Heart right ventricle (tissue), 16 donors: ENCODE measurements at regions of chr9 and their contacts with region 1.

Region 1: GRCh38 chr9:89999534-90000370 is 394.9 kb downstream of the GADD45G start:
- DNase-seq: peak; percentile 76 to 81
- ATAC-seq: peak; percentile 82 to 95 (median 92)
- H3K4me3 ChIP-seq: peak overlapping the region in 9 of 10 donors; percentile 10 to 34 (median 17)
- H3K27ac ChIP-seq: peak overlapping the region; percentile 71 to 91 (median 88)
- H3K4me1 ChIP-seq: peaks cover 23 to 64% (median 50%) of the 10 kb centered on the region in 9 donors
- H3K27me3 ChIP-seq: no peaks in the 10 kb centered on the region
- CTCF ChIP-seq: peak in 2 of 9 donors; percentile 35 to 37

Region 2: DNA sequence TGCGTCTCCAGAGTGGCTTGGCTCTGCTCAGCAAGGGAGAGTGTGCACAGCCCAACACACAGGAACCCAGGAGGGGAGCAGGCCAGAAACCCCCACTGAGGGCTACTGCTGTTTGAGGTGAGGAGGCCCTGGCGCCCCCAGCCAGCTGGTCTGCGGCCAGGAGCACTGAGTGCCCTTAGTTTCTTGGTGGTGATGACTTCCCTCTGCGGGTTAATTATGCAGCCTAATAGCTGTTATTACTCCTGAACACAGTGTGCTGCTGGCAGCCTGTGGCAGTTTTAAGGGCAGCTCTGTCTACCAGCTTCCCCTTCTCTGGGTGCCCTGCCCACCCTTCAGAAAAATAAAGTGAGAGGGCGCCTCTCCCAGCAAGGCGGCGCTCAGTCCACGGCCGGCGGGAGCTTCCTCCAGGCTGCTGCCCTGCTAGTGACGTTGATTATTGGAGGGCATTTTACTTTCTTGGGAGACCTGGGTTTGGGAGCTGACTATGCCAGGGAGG is 375.8 kb before region 1 on chr9:
- intact Hi-C with region 1: loop called in 1 of 10 experiments (anchors 5 kb)
- DNase-seq: peak in 1 of 2 donors; percentile 50
- ATAC-seq: peak; percentile 27 to 88 (median 68)
- H3K4me3 ChIP-seq: no peak overlapping the region
- H3K27ac ChIP-seq: peak overlapping the region; percentile 25 to 88 (median 56)
- H3K4me1 ChIP-seq: peaks cover 8 to 42% (median 28%) of the 10 kb centered on the region in 9 donors
- H3K27me3 ChIP-seq: peaks cover 0 to 6% (median 0%) of the 10 kb centered on the region in 7 donors
- CTCF ChIP-seq: peak in 4 of 9 donors; percentile 26 to 35 (median 30)

Region 3: DNA sequence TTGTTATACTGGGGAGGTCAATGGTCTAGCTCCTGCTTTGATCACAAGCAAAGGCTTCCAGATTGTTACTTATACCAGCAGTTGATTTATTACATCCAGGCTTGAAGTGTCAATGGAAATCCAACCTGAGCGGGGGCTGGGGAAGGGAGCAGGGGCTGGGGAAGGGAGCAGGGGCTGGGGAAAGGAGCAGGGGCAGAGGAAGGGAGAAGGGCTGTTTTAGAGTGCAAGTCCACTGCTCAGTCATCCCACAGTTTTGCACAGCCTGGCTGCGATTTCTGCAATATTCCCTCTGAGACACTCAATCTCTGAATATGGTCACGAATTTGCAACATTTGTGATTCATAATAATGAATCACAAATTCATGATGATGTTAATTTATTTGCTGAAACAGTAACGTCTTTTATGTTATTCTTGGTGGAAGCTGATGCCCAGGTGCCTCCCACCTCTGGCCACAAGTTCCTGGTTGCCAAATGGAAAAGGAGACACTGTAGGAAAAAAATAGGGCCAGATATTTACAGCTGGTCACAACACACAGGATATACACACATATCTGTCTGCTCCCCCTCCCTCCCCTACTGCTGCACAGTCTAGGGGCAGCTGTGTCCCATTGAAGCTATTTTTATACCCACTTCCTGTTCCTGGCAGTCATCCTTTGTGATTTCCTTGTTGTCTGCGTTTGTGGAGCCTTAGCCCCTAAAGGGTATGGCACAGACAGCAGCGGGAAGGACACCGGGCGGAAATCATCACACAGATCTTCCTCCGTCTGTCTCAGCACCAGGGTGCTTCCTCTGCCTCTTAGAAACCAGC is 69.9 kb before region 1 on chr9:
- intact Hi-C with region 1: loop called in 1 of 10 experiments (anchors 5 kb)
- DNase-seq: peak in 1 of 2 donors; percentile 30
- ATAC-seq: peak; percentile 63 to 90 (median 80)
- H3K4me3 ChIP-seq: no peak overlapping the region
- H3K27ac ChIP-seq: peak overlapping the region in 3 of 10 donors; percentile 15 to 25 (median 18)
- H3K4me1 ChIP-seq: peaks cover 3 to 31% (median 23%) of the 10 kb centered on the region in 9 donors
- H3K27me3 ChIP-seq: no peaks in the 10 kb centered on the region
- CTCF ChIP-seq: no peak

Region 4: DNA sequence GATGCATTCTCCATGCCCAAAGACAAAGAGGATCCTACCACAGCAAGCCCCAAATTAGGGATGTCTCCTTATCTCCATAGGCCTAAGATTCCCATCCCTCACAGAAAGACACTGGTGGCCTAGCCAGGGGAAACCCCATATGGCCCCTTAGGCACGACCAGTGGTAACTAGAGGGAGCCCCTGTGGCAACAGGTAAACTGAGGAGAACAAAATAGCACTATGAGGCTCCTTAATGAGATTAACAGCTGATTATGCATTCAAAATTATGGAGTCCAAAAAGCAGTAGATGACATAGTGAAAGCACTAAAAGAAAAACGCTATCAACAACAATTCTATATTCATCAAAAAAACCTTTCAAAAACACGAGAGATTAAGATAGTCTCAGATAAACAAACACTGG is 408.9 kb after region 1 on chr9:
- intact Hi-C with region 1: no loop called
- DNase-seq: no peak
- ATAC-seq: no peak
- H3K4me3 ChIP-seq: no peak overlapping the region
- H3K27ac ChIP-seq: no peak overlapping the region
- H3K4me1 ChIP-seq: no peaks in the 10 kb centered on the region
- H3K27me3 ChIP-seq: peaks cover 0 to 5% (median 0%) of the 10 kb centered on the region in 7 donors
- CTCF ChIP-seq: no peak